B cell (primary cell): ENCODE measurements at regions of chr17 and their contacts with region 1.

Region 1: DNA sequence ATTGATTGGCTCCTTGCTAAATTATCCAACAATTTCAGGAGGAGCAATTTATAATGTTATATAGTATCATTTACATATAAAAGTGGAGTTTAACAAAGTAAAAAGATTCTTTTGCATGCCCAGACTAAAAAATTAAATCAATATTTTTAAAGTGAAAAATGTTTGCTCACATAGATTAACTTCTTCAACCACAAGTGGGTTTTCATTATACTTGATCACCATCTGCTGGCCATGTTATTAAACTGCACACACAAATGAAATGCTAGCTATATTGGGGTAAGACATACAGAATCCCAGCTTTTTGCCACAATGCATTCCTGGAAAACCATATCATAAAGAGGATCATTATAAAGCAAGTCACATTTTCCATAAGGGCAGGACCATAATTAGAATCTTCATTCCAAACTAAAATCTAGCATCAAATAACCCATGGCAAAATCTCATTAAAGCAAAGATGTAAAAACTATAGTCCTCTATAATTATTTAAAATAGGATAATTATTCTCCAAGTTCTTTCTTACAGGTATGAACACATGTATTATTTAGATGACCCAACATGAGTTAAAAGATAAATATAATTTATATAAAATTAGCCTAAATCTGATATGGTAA is 26.3 kb downstream of the CEP112 start:
- DNase-seq: peak; percentile 53
- ATAC-seq: peak; percentile 56
- H3K4me3 ChIP-seq: no peak overlapping the region
- H3K4me3 Mint-ChIP-seq: no peak overlapping the region
- H3K27ac ChIP-seq: no peak overlapping the region
- H3K27ac Mint-ChIP-seq: no peak overlapping the region
- H3K4me1 ChIP-seq: no peaks in the 10 kb centered on the region
- H3K4me1 Mint-ChIP-seq: peaks cover 2% of the 10 kb centered on the region
- H3K27me3 ChIP-seq: no peaks in the 10 kb centered on the region
- H3K27me3 Mint-ChIP-seq: no peaks in the 10 kb centered on the region
- CTCF ChIP-seq: peak; percentile 87

Region 2: DNA sequence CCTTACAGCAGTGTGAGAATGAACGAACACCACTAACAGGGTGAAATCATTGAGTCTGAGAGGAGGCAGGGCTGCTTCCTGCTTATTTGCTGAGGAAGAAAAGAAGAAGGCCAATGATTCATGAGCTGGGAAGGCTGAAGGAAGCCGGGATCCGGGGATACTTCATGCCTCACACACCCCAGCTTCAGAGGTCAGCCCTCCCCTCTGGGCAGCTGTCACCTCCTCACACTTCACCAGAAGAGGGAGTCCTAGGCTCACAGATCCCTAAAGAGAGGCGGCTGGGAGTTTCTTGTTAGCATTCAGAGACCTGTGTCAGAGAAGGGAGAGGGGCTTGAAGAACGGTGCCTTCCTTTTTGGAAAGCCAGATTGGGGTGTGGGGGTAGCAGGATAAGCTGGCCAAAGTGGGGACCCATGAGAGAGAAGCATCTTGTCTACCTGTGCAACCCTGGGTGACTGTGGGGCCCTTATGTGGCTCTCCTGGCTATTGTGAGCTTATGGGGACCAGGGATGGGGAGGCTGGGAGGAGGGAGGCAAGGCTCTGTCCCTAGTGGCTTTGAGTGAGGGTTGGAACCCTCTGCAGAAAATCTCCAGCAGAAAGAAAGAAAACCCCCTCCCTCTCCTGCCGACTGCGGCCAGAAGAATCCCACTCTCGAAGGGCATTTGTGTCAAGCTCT is 933.8 kb before region 1 on chr17:
- CTCF ChIA-PET with region 1: interaction called, 25 read pairs
- POLR2A ChIA-PET with region 1: no interaction called
- intact Hi-C with region 1: no loop called
- DNase-seq: peak; percentile 31
- ATAC-seq: no peak
- H3K4me3 ChIP-seq: no peak overlapping the region
- H3K4me3 Mint-ChIP-seq: no peak overlapping the region
- H3K27ac ChIP-seq: no peak overlapping the region
- H3K27ac Mint-ChIP-seq: no peak overlapping the region
- H3K4me1 ChIP-seq: peaks cover 4 to 9% of the 10 kb centered on the region in 2 donors
- H3K4me1 Mint-ChIP-seq: peaks cover 8% of the 10 kb centered on the region
- H3K27me3 ChIP-seq: peaks cover 0 to 24% (median 5%) of the 10 kb centered on the region in 4 experiments
- H3K27me3 Mint-ChIP-seq: peaks cover 37% of the 10 kb centered on the region
- CTCF ChIP-seq: peak; percentile 25

Region 3: GRCh38 chr17:65294179-65294720 is 871.4 kb before region 1 on chr17:
- CTCF ChIA-PET with region 1: interaction called, 51 read pairs
- POLR2A ChIA-PET with region 1: no interaction called
- intact Hi-C with region 1: no loop called
- DNase-seq: peak; percentile 36
- ATAC-seq: peak; percentile 33
- H3K4me3 ChIP-seq: no peak overlapping the region
- H3K4me3 Mint-ChIP-seq: no peak overlapping the region
- H3K27ac ChIP-seq: no peak overlapping the region
- H3K27ac Mint-ChIP-seq: no peak overlapping the region
- H3K4me1 ChIP-seq: no peaks in the 10 kb centered on the region
- H3K4me1 Mint-ChIP-seq: no peaks in the 10 kb centered on the region
- H3K27me3 ChIP-seq: no peaks in the 10 kb centered on the region
- H3K27me3 Mint-ChIP-seq: peaks cover 12% of the 10 kb centered on the region
- CTCF ChIP-seq: peak; percentile 49

Region 4: DNA sequence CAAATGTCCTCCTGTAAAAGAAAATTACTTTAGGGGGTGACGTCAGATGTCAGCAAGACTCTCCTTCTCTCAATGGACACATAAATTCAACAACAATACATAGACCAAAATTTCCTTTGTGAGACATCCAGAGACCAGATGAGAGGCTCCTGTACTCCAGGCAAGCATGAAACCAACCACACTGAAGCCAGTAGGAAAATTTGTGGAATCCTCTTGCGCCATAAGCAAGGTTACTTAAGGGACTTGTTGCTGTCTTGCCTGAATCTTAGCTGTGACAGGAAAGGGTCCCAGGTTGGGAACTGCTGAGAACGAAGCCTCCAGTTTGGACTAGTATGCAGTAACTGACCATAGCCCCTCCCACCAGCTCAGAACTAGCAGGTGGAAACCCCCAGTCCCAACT is 29.7 kb before region 1 on chr17:
- CTCF ChIA-PET with region 1: no interaction called
- POLR2A ChIA-PET with region 1: no interaction called
- intact Hi-C with region 1: no loop called
- DNase-seq: no peak
- ATAC-seq: no peak
- H3K4me3 ChIP-seq: no peak overlapping the region
- H3K4me3 Mint-ChIP-seq: no peak overlapping the region
- H3K27ac ChIP-seq: no peak overlapping the region
- H3K27ac Mint-ChIP-seq: no peak overlapping the region
- H3K4me1 ChIP-seq: peaks cover 5 to 31% of the 10 kb centered on the region in 2 donors
- H3K4me1 Mint-ChIP-seq: peaks cover 26% of the 10 kb centered on the region
- H3K27me3 ChIP-seq: no peaks in the 10 kb centered on the region
- H3K27me3 Mint-ChIP-seq: no peaks in the 10 kb centered on the region
- CTCF ChIP-seq: no peak